GM18951 (cell line): ENCODE measurements at regions of chr3 and their contacts with region 1.

Region 1: GRCh38 chr3:134212906-134213665 is 37.6 kb downstream of the RYK start:
- POLR2A ChIP-seq: no peak

Region 2: DNA sequence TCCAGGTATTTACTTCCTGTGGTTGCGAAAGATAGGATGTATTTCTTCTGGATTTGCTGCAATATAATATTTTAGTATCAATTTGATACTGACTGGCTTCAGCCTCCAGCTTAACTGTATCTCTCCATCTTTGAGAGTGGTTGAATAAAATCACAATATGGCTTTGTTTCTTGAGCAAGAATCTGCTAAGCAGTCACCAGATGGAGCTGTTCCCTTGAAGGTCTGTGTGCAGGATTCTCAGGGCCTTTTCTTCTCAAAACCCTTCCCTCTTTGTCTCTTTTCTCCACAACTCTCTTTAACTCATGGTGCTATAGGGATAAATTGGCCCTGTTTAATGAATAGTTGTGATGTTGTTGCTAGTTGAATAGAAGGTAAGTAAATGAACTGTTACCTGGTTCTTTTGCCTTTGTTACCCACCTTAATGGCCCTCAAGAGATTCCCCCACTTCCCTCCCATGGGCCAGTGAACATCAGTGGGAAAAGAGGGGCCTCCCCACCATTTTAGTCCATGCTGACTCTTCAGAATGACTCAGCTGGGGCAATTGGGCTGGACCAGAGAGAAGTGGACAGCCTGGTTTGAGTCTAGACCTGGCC is 282.6 kb before region 1 on chr3:
- in situ Hi-C with region 1: loop called (anchors 10 kb)
- POLR2A ChIP-seq: no peak

Region 3: GRCh38 chr3:134106580-134106979 is 106.5 kb before region 1 on chr3:
- in situ Hi-C with region 1: no loop called
- POLR2A ChIP-seq: no peak

Region 4: GRCh38 chr3:135007607-135008006 is 794.5 kb after region 1 on chr3:
- in situ Hi-C with region 1: no loop called
- POLR2A ChIP-seq: no peak